MCF 10A (cell line): ENCODE measurements at regions of chr17 and their contacts with region 1.

Region 1: GRCh38 chr17:50719144-50719923 is at the start of gene LUC7L3:
- DNase-seq: peak; percentile 95
- H3K4me3 Mint-ChIP-seq: peak within 1 kb of the TSS; percentile 96
- H3K27ac Mint-ChIP-seq: peak within 1 kb of the TSS; percentile 99
- H3K4me1 Mint-ChIP-seq: peaks cover 6% of the 10 kb centered on the region
- H3K27me3 Mint-ChIP-seq: no peaks in the 10 kb centered on the region
- CTCF ChIP-seq: no peak
- total RNA-seq, gene LUC7L3: 99.4 and 108 TPM in 2 replicates

Region 2: DNA sequence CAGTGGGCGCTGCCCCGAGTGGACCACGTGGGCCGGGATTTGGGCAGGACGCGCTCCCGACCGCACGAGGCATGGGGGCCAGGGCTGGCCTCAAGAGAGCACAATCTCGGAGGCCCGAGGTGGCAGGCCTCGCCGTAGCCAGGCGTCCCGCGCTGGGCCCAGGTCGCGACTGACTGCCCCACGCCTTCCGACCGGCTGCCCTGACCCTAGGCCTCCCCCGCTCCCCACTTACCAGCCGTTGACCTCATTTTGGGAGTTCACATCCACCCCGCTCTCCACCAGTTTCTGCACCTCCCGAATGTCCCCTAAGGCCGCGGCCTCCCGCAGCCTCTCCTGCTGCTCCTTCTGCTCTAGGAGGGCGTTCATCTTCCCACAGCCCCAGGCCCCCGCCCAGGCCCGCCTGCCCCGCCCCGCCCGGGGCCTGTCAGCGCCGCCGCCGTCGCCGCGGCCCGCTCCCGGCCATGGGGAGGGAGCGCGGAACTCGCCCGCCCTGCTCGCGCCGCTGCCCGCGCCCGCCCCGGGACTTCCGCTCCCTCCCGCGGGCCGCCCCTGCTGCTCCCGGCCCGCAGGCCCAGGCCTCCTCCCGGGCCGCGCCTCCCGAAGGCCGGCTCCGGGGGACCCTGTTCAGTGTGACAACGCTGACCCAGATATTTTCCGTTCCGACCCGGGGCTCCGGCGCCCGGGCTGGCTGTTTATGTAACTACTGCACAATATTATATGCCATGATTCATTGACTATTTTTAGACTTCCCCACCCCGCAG is 11.9 kb before region 1 on chr17 and contains the start of gene ANKRD40:
- CTCF ChIA-PET with region 1: interaction called, 3 read pairs
- POLR2A ChIA-PET with region 1: interaction called, 67 read pairs
- intact Hi-C with region 1: loop called (anchors 1 kb)
- DNase-seq: peak; percentile 94
- H3K4me3 Mint-ChIP-seq: peak within 1 kb of the TSS; percentile 95
- H3K27ac Mint-ChIP-seq: peak within 1 kb of the TSS; percentile 76
- H3K4me1 Mint-ChIP-seq: peaks cover 25% of the 10 kb centered on the region
- H3K27me3 Mint-ChIP-seq: no peaks in the 10 kb centered on the region
- CTCF ChIP-seq: no peak
- total RNA-seq, gene ANKRD40: 42.2 and 46.4 TPM in 2 replicates

Region 3: GRCh38 chr17:50758989-50759544 is 39.7 kb after region 1 on chr17:
- CTCF ChIA-PET with region 1: no interaction called
- POLR2A ChIA-PET with region 1: no interaction called
- intact Hi-C with region 1: no loop called
- DNase-seq: no peak
- H3K4me3 Mint-ChIP-seq: no peak overlapping the region
- H3K27ac Mint-ChIP-seq: no peak overlapping the region
- H3K4me1 Mint-ChIP-seq: peaks cover 11% of the 10 kb centered on the region
- H3K27me3 Mint-ChIP-seq: no peaks in the 10 kb centered on the region
- CTCF ChIP-seq: no peak